PC-9 (cell line): ENCODE measurements at regions of chr18 and their contacts with region 1.

Region 1: GRCh38 chr18:41745166-41746049 is 209.6 kb upstream of the PIK3C3 start:
- DNase-seq: peak; percentile 45 to 49
- H3K4me3 ChIP-seq: no peak overlapping the region
- H3K27ac ChIP-seq: no peak overlapping the region
- H3K4me1 ChIP-seq: no peaks in the 10 kb centered on the region
- H3K27me3 ChIP-seq: no peaks in the 10 kb centered on the region
- CTCF ChIP-seq: peak; percentile 74

Region 2: DNA sequence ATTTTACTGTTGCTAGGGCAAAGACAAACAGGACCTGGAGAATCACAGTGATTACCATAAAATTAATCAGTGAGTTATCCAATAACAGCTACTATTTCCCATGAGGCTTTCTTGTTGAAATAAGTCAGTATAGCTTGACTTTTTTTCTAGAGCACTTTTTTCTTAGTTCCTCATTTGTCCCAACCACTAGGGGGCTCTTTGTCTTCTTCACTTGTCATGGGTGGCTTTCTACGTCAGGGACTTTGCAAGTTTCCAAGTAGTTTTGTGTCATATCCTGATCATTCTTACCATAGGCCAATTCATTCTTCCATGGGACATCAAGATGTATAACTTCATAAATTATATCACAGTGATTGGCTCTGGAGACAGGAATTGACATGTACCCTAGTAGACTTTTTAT is 810.0 kb before region 1 on chr18:
- CTCF ChIA-PET with region 1: no interaction called
- POLR2A ChIA-PET with region 1: no interaction called
- intact Hi-C with region 1: loop called (anchors 5 kb)
- DNase-seq: no peak
- H3K4me3 ChIP-seq: no peak overlapping the region
- H3K27ac ChIP-seq: no peak overlapping the region
- H3K4me1 ChIP-seq: no peaks in the 10 kb centered on the region
- H3K27me3 ChIP-seq: no peaks in the 10 kb centered on the region
- CTCF ChIP-seq: peak; percentile 54

Region 3: DNA sequence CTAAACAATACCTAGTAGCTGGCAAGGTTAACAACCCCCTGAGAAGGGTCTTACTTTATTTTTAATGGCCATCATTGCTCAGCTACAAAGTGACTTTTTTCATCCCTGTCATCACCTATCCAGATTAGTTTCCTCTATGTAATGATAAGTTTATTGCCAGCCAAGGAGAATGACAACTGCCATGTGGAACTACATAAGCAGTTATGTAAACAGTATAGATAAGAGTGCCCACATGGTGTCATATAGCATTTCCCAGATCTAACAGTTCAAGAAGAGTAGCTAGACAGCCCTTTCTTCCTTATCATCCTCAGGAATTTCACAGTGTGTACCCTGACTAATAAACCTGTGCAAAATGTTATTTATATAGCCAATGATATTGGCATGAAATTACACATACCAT is 30.5 kb before region 1 on chr18:
- CTCF ChIA-PET with region 1: no interaction called
- POLR2A ChIA-PET with region 1: no interaction called
- intact Hi-C with region 1: no loop called
- DNase-seq: no peak
- H3K4me3 ChIP-seq: no peak overlapping the region
- H3K27ac ChIP-seq: no peak overlapping the region
- H3K4me1 ChIP-seq: no peaks in the 10 kb centered on the region
- H3K27me3 ChIP-seq: no peaks in the 10 kb centered on the region
- CTCF ChIP-seq: no peak

Region 4: DNA sequence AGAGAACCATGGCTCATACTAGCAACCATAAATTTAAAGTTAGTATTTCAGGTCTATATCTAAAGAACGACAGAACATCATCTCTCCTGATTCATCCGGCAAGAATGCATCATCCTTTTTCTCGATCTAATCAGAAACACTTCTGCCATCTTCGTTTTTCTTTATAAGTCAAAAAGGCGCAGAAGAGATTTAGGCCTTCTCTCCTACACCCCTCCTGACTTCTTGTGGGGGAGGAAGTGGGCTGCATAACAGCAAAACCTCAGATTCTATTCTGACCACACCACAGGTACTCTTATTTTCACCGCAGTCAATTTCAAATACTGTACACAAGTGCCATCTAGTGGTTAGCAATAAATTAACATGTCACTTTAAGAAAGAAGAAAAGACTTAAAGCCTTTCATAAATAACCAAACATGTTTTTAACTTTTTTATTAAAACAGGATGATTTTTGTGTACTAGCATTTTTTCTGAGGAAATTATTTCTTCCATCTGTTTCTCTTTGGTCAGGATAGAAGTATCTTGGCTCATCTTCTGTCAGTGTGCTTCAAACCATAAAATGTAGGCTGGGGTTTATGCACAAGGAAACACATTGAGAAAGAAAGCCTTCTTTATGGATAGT is 161.2 kb after region 1 on chr18:
- CTCF ChIA-PET with region 1: no interaction called
- POLR2A ChIA-PET with region 1: no interaction called
- intact Hi-C with region 1: loop called (anchors 10 kb)
- DNase-seq: peak in 1 of 2 experiments; percentile 34
- H3K4me3 ChIP-seq: no peak overlapping the region
- H3K27ac ChIP-seq: no peak overlapping the region
- H3K4me1 ChIP-seq: no peaks in the 10 kb centered on the region
- H3K27me3 ChIP-seq: no peaks in the 10 kb centered on the region
- CTCF ChIP-seq: peak; percentile 73